ENCODE measurements at regions of chr14 and their contacts with region 1.

Region 1: DNA sequence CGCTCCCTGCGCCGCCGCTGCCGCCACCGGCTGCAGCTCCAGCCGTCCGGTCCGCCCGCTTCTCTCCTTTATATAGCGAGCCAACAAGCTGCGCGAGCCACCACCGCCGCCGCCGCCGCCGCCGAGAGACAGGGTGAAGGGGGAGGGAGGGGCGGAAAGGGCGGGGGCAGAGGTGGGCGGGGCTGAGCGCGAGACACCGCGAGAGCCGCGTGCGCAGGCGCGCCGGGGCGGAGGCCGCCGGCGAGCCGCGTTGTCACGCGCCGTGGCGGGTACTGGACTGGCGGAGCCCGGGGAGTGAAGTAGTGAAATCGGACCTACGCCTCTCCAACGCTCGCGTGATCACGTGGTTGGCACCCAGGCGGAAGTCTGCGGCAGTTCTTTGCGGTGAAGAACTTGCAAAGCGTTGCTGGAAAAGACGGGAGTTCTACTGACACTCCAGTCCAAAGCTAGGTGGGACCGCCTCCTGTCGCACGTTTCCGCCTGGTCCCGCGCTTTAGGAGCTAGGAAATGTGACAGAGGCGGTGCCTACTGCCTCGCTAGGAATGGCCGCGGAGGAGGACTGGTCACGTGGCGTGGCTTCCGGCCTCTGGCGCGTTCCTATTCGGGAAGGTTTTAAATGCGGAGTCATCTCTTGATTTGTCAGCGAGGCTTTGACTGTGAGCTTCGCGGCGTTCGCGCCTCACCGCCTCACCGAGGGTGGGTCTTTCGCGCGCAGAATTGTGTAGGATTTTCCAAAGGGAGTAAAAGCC is at the start of gene GTF2A1:
- DNase-seq: peak; percentile 96
- H3K4me3 Mint-ChIP-seq: peak within 1 kb of the TSS; percentile 99
- H3K27ac Mint-ChIP-seq: peak within 1 kb of the TSS; percentile 100
- H3K4me1 Mint-ChIP-seq: peaks cover 40% of the 10 kb centered on the region
- H3K27me3 Mint-ChIP-seq: peaks cover 2% of the 10 kb centered on the region
- total RNA-seq, gene GTF2A1: 34.2 to 36.0 TPM

Region 2: DNA sequence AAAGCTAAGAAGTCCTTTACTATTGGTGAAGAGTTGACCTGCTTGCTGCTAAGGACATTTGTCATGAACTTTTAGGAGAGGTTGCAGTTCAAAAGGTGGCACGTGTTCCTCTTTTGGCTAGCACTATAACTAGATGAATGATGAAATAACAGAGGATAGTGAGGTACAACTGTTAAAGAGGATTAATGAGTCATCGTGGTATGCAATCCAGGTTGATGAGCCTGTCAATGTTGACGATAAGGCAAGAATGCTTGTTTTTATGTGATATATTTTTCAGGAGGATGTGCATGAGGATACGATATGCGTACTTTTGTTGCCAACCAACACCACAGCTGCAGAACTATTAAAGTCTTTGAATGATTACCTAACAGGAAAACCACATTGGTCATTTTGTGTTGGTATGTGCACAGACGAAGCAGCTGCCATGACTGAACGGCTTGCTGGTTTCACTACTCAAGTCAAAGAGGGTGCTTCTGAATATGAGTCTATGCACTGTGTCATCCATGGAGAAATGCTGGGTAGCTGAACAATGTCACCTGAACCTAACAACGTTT is 290.1 kb before region 1 on chr14:
- CTCF ChIA-PET with region 1: interaction called, 4 read pairs
- POLR2A ChIA-PET with region 1: interaction called, 11 read pairs
- DNase-seq: peak; percentile 70
- H3K4me3 Mint-ChIP-seq: peak overlapping the region; percentile 42
- H3K27ac Mint-ChIP-seq: peak overlapping the region; percentile 88
- H3K4me1 Mint-ChIP-seq: peaks cover 64% of the 10 kb centered on the region
- H3K27me3 Mint-ChIP-seq: no peaks in the 10 kb centered on the region

Region 3: DNA sequence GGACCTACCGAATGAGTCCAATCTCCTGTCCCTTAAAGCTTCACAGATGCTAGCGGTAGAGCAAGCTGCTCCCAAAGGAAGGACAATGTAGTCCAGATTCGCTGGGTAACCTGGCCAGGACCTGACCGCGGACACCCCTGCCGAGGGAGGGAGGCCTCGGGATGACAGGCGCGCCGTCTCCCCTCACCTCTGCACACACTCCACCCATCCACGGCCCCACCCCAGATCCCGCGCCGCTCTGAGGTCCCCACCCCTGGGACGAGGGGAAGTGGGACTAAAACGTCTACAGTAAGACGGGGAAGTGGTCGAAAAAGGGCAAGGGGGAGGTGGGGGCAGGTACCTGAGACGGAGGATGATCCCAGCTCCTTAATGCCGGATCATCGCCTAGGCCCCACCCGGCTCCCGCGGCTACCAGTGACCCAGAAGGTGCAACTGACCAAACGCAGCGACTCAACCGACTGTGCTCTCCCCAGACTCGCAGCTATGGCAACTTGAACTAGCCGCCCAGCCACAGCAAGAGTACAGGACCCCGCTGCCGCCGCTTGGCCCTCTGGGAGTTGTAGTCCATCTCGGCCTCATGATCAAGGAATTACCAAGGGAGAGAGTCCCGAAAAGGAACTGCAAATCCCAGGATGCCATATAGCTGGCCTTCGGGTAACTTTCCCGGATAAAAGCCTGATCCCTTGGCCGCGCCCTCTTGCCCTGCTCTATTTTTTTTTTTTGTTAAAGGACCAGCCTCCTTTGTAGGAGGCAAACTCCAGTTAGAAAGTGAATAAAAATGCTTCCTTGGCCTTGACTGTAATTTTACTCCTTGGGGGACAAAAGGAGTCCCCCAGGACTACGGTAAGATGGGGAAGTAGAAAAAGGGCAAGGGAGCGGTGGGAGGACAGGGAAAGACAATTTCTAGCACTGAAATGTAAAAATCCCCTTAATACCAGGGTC is 279.5 kb before region 1 on chr14 and contains the start of gene CEP128:
- CTCF ChIA-PET with region 1: no interaction called
- POLR2A ChIA-PET with region 1: interaction called, 11 read pairs
- DNase-seq: peak; percentile 92
- H3K4me3 Mint-ChIP-seq: peak within 1 kb of the TSS; percentile 88
- H3K27ac Mint-ChIP-seq: peak within 1 kb of the TSS; percentile 66
- H3K4me1 Mint-ChIP-seq: peaks cover 32% of the 10 kb centered on the region
- H3K27me3 Mint-ChIP-seq: no peaks in the 10 kb centered on the region
- total RNA-seq, gene CEP128: 24.7 to 26.0 TPM

Region 4: DNA sequence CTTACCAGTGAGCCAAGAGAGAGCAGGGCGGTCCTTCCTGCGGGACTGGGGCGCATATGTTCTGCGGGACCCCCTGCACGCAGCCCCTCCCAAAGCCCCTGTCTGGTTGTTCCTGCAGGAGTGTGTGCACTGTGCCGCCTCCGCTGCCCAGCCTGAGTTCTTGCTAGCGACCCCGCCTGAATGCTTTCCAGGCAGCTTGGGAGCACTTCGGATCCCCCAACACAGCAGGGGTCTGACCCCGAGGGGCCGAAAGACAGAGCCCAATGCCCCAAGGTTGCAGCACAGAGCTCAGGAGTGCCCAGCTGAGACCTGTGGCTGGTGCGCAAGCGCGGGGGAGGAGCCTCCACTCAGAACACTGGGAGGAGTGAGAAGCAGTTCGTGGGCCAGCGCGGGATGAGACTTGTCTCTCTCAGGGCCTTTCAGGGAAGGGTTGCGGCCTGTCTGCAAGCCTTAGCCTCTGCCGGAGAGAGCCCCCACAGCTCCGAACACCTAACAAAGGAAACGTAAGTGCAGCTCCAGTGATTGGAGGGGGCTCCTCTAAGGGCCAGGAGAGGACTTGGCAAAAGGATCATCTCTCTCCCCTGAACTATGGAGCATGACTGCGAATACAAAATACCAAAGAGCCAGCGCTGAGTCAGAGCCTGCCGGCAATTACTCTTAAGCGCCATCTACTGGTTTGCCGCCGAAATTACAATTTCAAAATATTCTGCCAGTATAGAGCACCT is 50.7 kb before region 1 on chr14:
- CTCF ChIA-PET with region 1: interaction called, 18 read pairs
- POLR2A ChIA-PET with region 1: interaction called, 20 read pairs
- DNase-seq: peak; percentile 90
- H3K4me3 Mint-ChIP-seq: peak overlapping the region; percentile 84
- H3K27ac Mint-ChIP-seq: peak overlapping the region; percentile 89
- H3K4me1 Mint-ChIP-seq: peaks cover 46% of the 10 kb centered on the region
- H3K27me3 Mint-ChIP-seq: no peaks in the 10 kb centered on the region

Region 5: GRCh38 chr14:81473456-81474147 is 252.6 kb after region 1 on chr14:
- CTCF ChIA-PET with region 1: interaction called, 3 read pairs
- POLR2A ChIA-PET with region 1: interaction called, 11 read pairs
- DNase-seq: no peak
- H3K4me3 Mint-ChIP-seq: peak overlapping the region; percentile 61
- H3K27ac Mint-ChIP-seq: peak overlapping the region; percentile 92
- H3K4me1 Mint-ChIP-seq: peaks cover 55% of the 10 kb centered on the region
- H3K27me3 Mint-ChIP-seq: no peaks in the 10 kb centered on the region

Region 6: DNA sequence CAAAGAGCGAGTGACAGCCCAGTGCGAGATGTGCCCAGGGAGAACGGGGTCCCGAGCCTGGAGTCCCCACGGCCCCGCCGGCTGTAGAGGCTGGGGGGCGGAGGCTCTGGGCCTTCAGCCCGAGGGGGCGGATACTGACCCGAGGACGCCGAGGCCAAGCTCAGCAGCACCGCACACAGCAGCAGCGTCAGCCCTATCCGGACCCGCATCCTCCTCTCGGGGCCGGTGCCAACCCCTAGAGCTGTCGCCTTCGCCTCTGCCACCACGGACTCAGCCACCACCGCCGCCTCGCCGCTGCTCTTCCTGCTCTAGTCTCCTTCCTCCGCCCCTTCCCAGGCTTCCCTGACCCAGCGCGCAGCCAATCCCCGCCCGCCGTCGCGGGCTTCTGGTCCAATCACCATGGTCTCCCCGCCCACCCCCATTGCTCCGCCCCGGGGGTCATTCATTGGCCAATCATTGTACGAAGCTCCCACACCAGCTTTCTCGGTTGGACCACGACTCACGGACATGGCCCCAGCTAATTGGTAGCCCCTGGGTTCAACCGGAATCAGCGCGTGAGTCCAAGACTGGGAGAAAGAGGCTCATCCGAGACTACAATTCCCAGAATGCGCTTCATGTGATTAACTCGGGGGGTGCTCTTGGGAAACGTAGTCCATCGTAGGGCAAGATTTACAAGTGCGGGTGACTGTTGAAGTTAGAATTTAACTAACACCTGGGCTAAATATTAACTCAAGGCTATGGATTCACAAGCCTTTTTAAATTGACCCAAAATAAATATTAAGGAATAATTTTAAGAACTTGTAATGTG is 312.7 kb after region 1 on chr14 and contains the start of gene SEL1L:
- CTCF ChIA-PET with region 1: no interaction called
- POLR2A ChIA-PET with region 1: interaction called, 12 read pairs
- DNase-seq: peak; percentile 100
- H3K4me3 Mint-ChIP-seq: peak within 1 kb of the TSS; percentile 98
- H3K27ac Mint-ChIP-seq: peak within 1 kb of the TSS; percentile 79
- H3K4me1 Mint-ChIP-seq: peaks cover 51% of the 10 kb centered on the region
- H3K27me3 Mint-ChIP-seq: no peaks in the 10 kb centered on the region
- total RNA-seq, gene SEL1L: 65.9 to 67.6 TPM

Measured in activated CD4-positive, alpha-beta memory T cell treated with anti-CD3 and anti-CD28 coated beads, Interleukin-2, amount 10 ng/mL, durations not matched to agents 7 days and 5 days (primary cell).